MCF 10A (cell line): ENCODE measurements at regions of chr11 and their contacts with region 1.

Region 1: DNA sequence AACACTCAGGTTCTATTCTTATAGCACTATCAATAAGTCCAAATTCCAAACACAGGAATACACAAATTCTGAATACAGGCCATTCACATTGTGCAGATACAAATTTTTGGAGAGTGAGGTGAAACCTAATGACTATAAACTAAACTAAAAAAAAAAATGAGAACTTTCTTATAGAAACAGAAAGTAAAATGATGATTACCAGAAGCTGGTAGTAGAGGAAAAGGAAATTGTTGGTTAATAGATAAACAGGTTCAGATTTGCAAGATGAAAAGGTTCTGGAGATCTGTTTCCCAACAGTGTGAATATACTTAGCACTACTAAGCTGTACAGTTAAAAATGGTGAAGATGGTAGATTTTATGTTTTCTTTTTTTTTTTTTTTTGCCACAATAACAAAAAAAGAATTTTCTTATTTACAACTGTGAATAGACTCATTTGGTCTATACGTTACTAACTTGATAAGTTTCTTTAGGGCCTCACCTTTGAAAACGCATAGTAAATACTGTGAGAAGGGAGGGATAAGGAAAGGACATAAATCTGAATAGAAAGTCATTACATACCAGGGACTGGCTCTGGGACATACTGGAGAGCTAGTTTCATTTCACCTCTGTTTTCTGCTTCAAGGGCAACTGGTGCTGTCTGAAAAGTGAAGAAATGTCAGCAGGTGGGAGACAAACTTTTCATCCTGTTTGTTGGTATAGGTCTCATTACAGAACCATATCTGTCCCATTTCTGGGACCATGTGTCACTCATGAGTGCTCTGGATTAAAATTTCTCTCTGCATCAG is 14.2 kb upstream of the CCDC89 start:
- DNase-seq: no peak
- H3K4me3 Mint-ChIP-seq: no peak overlapping the region
- H3K27ac Mint-ChIP-seq: no peak overlapping the region
- H3K4me1 Mint-ChIP-seq: no peaks in the 10 kb centered on the region
- H3K27me3 Mint-ChIP-seq: no peaks in the 10 kb centered on the region
- CTCF ChIP-seq: no peak

Region 2: GRCh38 chr11:85182441-85183387 is 517.4 kb before region 1 on chr11:
- CTCF ChIA-PET with region 1: no interaction called
- POLR2A ChIA-PET with region 1: no interaction called
- intact Hi-C with region 1: no loop called
- DNase-seq: peak; percentile 46
- H3K4me3 Mint-ChIP-seq: no peak overlapping the region
- H3K27ac Mint-ChIP-seq: no peak overlapping the region
- H3K4me1 Mint-ChIP-seq: no peaks in the 10 kb centered on the region
- H3K27me3 Mint-ChIP-seq: peaks cover 11% of the 10 kb centered on the region
- CTCF ChIP-seq: peak; percentile 23

Region 3: GRCh38 chr11:85582111-85582510 is 118.0 kb before region 1 on chr11:
- CTCF ChIA-PET with region 1: no interaction called
- POLR2A ChIA-PET with region 1: no interaction called
- intact Hi-C with region 1: no loop called
- DNase-seq: no peak
- H3K4me3 Mint-ChIP-seq: no peak overlapping the region
- H3K27ac Mint-ChIP-seq: no peak overlapping the region
- H3K4me1 Mint-ChIP-seq: no peaks in the 10 kb centered on the region
- H3K27me3 Mint-ChIP-seq: peaks cover 34% of the 10 kb centered on the region
- CTCF ChIP-seq: no peak

Region 4: DNA sequence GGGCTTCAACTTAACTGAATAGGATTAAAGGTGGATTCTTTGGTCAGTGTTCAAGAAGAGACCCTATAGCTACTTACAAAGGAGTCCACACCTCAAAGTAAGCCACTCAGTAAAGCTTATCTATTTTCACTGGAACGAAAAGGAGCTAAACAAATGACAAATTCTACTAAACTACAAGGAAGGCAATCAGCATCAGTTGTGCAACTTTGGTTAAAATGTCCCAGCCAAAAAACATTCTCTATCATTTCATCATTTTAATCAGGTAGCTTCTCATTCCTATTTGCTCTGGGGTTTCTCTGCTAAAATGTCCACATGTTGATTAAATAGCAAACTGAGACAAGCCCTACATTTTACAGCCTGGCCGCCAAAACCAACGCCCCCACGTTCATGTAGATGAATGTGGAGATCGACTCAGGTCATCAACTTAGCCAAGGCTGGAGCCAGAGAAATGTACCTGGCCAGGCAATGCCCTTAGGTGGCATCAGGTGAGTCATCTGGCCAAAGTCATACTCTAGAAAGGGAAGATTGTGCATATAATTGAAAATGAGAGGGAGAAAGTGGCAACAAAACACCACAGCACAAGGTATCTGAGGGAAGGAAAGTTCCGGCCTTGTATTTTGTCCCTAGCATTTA is 22.8 kb after region 1 on chr11:
- CTCF ChIA-PET with region 1: interaction called, 5 read pairs
- POLR2A ChIA-PET with region 1: no interaction called
- intact Hi-C with region 1: loop called (anchors 2 kb)
- DNase-seq: peak; percentile 68
- H3K4me3 Mint-ChIP-seq: no peak overlapping the region
- H3K27ac Mint-ChIP-seq: no peak overlapping the region
- H3K4me1 Mint-ChIP-seq: peaks cover 24% of the 10 kb centered on the region
- H3K27me3 Mint-ChIP-seq: no peaks in the 10 kb centered on the region
- CTCF ChIP-seq: no peak